CD14-positive monocyte (primary cell): ENCODE measurements at regions of chr5 and their contacts with region 1.

Region 1: GRCh38 chr5:117454716-117455596 is 880.3 kb upstream of the SEMA6A start:
- DNase-seq: peak; percentile 13 to 31 (median 28)
- H3K4me3 ChIP-seq: no peak overlapping the region
- H3K4me3 Mint-ChIP-seq: no peak overlapping the region
- H3K27ac ChIP-seq: no peak overlapping the region
- H3K27ac Mint-ChIP-seq: peak overlapping the region in 1 of 7 donors; percentile 43
- H3K4me1 ChIP-seq: no peaks in the 10 kb centered on the region
- H3K4me1 Mint-ChIP-seq: peaks cover 5% of the 10 kb centered on the region
- H3K27me3 ChIP-seq: no peaks in the 10 kb centered on the region
- H3K27me3 Mint-ChIP-seq: peaks cover 0 to 2% (median 2%) of the 10 kb centered on the region in 3 donors
- CTCF ChIP-seq: peak; percentile 92

Region 2: GRCh38 chr5:117255211-117256027 is 199.5 kb before region 1 on chr5:
- intact Hi-C with region 1: no loop called
- DNase-seq: no peak
- H3K4me3 ChIP-seq: no peak overlapping the region
- H3K4me3 Mint-ChIP-seq: no peak overlapping the region
- H3K27ac ChIP-seq: no peak overlapping the region
- H3K27ac Mint-ChIP-seq: no peak overlapping the region
- H3K4me1 ChIP-seq: no peaks in the 10 kb centered on the region
- H3K4me1 Mint-ChIP-seq: no peaks in the 10 kb centered on the region
- H3K27me3 ChIP-seq: no peaks in the 10 kb centered on the region
- H3K27me3 Mint-ChIP-seq: no peaks in the 10 kb centered on the region
- CTCF ChIP-seq: no peak

Region 3: DNA sequence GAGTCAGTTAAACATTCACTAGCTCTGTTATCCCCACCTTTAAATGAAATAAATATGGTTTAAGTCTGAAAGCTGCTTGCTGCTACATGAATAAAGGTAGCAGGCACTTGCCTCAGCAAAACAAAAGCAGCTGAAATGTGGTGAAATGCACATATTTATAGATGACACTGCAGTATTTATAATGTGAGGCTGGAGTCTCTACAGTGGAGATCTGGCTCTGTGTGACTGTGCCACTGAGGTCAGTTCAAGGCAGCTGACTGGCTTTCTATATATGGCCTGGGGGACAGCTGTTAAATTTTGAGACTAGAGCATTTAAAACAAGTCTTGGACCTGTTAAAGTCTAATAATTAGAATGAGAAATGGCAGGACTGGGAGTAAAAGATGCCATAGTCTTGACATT is 20.7 kb before region 1 on chr5:
- intact Hi-C with region 1: no loop called
- DNase-seq: no peak
- H3K4me3 ChIP-seq: no peak overlapping the region
- H3K4me3 Mint-ChIP-seq: no peak overlapping the region
- H3K27ac ChIP-seq: no peak overlapping the region
- H3K27ac Mint-ChIP-seq: no peak overlapping the region
- H3K4me1 ChIP-seq: no peaks in the 10 kb centered on the region
- H3K4me1 Mint-ChIP-seq: no peaks in the 10 kb centered on the region
- H3K27me3 ChIP-seq: no peaks in the 10 kb centered on the region
- H3K27me3 Mint-ChIP-seq: no peaks in the 10 kb centered on the region
- CTCF ChIP-seq: no peak

Region 4: DNA sequence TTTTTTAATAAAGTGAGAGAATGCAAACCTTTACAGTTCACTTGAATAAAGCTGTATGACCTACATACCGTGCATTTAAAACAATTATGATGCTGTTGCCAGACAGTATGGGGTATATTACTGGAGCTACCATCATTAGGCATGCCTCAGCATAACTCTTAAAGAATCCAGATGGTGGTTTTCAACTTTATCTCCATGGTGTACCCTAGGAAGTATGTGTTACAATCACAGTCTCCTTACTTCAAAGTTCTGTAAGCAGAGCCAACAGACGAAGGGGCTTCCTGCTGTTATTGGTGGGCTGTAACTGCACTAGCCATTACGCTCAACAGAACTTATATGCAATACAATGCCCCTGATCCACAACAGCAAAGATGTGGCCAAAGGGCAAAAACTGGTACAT is 730.1 kb after region 1 on chr5:
- intact Hi-C with region 1: no loop called
- DNase-seq: no peak
- H3K4me3 ChIP-seq: no peak overlapping the region
- H3K4me3 Mint-ChIP-seq: no peak overlapping the region
- H3K27ac ChIP-seq: no peak overlapping the region
- H3K27ac Mint-ChIP-seq: no peak overlapping the region
- H3K4me1 ChIP-seq: no peaks in the 10 kb centered on the region
- H3K4me1 Mint-ChIP-seq: no peaks in the 10 kb centered on the region
- H3K27me3 ChIP-seq: no peaks in the 10 kb centered on the region
- H3K27me3 Mint-ChIP-seq: no peaks in the 10 kb centered on the region
- CTCF ChIP-seq: no peak

Region 5: DNA sequence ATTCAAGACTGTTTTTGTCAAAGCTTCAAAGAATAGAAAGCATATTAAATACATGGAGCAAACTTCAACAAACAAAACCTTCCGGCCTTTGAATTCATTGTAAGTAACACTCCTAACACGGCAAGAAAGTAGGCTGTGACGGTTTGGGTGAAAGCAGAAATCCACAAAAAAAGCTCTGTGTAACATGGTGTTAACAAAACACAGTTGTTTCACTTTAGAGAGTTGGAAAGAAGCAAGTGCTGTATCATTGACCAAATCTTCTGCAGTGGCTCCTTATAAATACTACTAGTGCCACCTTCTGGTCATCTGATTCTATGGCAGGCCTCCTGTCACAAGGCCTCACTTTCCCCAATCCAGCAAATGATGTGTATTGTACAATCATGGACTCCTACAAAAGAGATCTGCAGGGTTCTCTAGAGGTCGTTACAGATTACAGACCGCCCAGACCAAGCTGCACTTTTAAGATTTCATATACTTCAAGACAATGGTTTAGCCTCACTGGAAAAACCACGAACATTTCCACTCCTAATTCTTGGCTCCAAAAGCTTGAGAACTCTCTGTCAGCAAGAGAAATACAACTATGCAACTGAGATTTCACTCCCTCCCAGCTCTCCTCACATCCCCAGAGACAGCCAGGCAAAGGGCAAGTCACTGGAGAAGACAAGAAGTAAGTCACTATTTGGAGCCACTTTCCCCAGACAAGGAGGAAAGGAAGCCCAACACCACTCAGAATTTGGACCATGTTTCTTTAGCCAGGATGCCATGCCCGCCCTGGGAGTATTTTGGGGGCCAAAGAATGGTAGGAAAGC is 1337.2 kb after region 1 on chr5:
- intact Hi-C with region 1: loop called (anchors 2 to 5 kb)
- DNase-seq: peak; percentile 12 to 29 (median 28)
- H3K4me3 ChIP-seq: no peak overlapping the region
- H3K4me3 Mint-ChIP-seq: no peak overlapping the region
- H3K27ac ChIP-seq: no peak overlapping the region
- H3K27ac Mint-ChIP-seq: peak overlapping the region in 1 of 7 donors; percentile 68
- H3K4me1 ChIP-seq: no peaks in the 10 kb centered on the region
- H3K4me1 Mint-ChIP-seq: no peaks in the 10 kb centered on the region
- H3K27me3 ChIP-seq: no peaks in the 10 kb centered on the region
- H3K27me3 Mint-ChIP-seq: peaks cover 0 to 2% (median 1%) of the 10 kb centered on the region in 3 donors
- CTCF ChIP-seq: peak; percentile 76